ENCODE measurements at regions of chr3 and their contacts with region 1.

Region 1: GRCh38 chr3:193831495-193832455 is 238.8 kb downstream of the OPA1 start:
- DNase-seq: no peak
- ATAC-seq: peak; percentile 85
- H3K4me3 Mint-ChIP-seq: peak overlapping the region; percentile 48
- H3K27ac Mint-ChIP-seq: peak overlapping the region; percentile 87
- H3K4me1 Mint-ChIP-seq: peaks cover 40% of the 10 kb centered on the region
- H3K27me3 Mint-ChIP-seq: peaks cover 4% of the 10 kb centered on the region
- CTCF ChIP-seq: no peak

Region 2: GRCh38 chr3:193620650-193621049 is 211.1 kb before region 1 on chr3:
- CTCF ChIA-PET with region 1: no interaction called
- POLR2A ChIA-PET with region 1: no interaction called
- intact Hi-C with region 1: no loop called
- DNase-seq: no peak
- ATAC-seq: no peak
- H3K4me3 Mint-ChIP-seq: no peak overlapping the region
- H3K27ac Mint-ChIP-seq: no peak overlapping the region
- H3K4me1 Mint-ChIP-seq: no peaks in the 10 kb centered on the region
- H3K27me3 Mint-ChIP-seq: no peaks in the 10 kb centered on the region
- CTCF ChIP-seq: no peak

Region 3: DNA sequence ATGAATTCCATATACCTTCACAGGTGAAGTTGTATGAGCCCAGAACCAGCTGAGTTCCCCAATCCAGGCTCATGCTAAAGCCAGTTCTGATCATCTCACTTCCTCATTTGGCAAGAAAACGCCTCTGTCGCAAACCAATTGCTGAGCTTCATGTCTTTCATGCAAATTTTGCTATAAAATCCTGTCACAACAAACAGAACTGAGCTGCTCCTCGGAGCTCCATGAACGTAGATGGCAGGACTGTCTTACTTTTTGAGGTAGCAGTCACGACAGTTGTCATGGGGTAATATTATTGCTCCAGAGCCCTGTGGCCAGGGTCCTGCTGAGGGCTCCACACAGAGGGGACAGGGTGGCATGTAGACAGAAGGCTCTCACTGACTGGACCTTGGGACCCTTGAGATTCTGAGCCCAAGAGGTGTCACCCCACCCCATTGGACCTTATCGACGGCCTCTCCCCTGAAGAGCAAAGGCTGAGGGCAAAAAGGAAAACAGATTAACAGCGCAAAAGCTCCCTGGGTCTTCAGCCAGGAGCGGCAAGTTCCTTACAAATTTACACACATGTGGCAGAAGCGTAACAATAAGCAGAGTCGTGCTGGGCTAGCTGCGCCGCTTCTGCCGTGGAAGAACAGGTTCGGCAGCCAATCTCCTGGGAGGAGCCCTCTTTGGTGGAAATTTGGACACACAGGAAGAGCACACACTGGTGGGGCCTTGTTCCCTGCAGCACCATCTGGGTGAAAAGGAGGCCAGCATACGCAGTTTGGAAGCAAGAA is 10.4 kb after region 1 on chr3:
- CTCF ChIA-PET with region 1: no interaction called
- POLR2A ChIA-PET with region 1: interaction called, 3 read pairs
- intact Hi-C with region 1: loop called (anchors 1 kb)
- DNase-seq: peak; percentile 24
- ATAC-seq: peak; percentile 91
- H3K4me3 Mint-ChIP-seq: peak overlapping the region; percentile 72
- H3K27ac Mint-ChIP-seq: peak overlapping the region; percentile 81
- H3K4me1 Mint-ChIP-seq: peaks cover 42% of the 10 kb centered on the region
- H3K27me3 Mint-ChIP-seq: peaks cover 2% of the 10 kb centered on the region
- CTCF ChIP-seq: no peak

Region 4: DNA sequence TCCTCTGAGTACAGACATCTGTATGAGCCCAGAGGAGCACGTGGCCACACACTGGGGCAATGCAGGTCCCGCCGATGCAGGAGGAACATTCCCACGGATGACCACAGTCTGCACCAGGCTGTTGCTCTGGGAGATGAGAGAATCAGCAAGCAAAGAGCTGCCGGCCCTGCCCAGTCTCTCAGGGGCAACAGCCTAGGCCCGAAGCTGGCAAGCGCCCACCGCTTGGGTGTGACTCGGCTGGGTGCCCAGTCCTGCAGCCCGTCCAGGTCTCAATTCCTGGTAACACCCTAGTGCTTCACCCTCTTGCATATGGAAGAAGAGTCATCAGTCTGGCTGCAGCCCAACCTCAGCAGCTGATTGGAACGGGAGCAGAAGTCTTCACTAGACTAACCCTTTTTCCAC is 150.5 kb after region 1 on chr3:
- CTCF ChIA-PET with region 1: no interaction called
- POLR2A ChIA-PET with region 1: no interaction called
- intact Hi-C with region 1: no loop called
- DNase-seq: no peak
- ATAC-seq: no peak
- H3K4me3 Mint-ChIP-seq: no peak overlapping the region
- H3K27ac Mint-ChIP-seq: no peak overlapping the region
- H3K4me1 Mint-ChIP-seq: no peaks in the 10 kb centered on the region
- H3K27me3 Mint-ChIP-seq: peaks cover 11% of the 10 kb centered on the region
- CTCF ChIP-seq: no peak

Region 5: GRCh38 chr3:194003125-194004057 is 171.6 kb after region 1 on chr3:
- CTCF ChIA-PET with region 1: no interaction called
- POLR2A ChIA-PET with region 1: no interaction called
- intact Hi-C with region 1: loop called (anchors 1 kb)
- DNase-seq: peak; percentile 70
- ATAC-seq: peak; percentile 94
- H3K4me3 Mint-ChIP-seq: peak overlapping the region; percentile 76
- H3K27ac Mint-ChIP-seq: peak overlapping the region; percentile 65
- H3K4me1 Mint-ChIP-seq: peaks cover 40% of the 10 kb centered on the region
- H3K27me3 Mint-ChIP-seq: peaks cover 6% of the 10 kb centered on the region
- CTCF ChIP-seq: no peak

Region 6: DNA sequence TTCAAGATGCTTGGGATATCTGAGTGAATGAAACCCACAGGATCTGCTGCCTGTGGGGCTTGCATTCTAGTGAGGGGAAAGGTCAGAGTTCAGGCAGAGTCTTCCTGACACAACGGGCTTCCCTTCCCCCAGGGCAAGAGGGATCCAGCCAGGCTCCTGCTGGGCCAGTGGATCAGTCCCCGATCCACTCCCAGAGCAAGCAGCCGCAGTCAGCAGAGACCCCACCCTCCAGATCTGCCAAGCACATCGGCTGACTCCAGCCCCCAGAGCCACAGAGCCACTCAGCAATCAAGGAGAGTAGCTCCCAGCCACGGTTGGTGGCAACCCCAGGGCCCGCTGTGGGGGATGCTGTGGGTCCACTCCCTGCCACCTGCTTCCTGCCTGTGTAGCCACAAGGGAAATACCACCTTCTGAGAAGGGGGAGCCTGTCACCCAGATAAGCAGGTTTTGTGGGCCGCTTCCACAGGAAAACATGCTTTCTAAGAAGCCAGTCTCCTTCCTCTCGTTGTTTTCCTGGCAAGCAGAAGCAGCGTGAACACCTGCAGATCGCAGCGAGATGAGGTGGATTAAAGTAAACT is 474.4 kb after region 1 on chr3:
- CTCF ChIA-PET with region 1: no interaction called
- POLR2A ChIA-PET with region 1: interaction called, 3 read pairs
- intact Hi-C with region 1: loop called (anchors 1 kb)
- DNase-seq: peak; percentile 51
- ATAC-seq: peak; percentile 61
- H3K4me3 Mint-ChIP-seq: peak overlapping the region; percentile 70
- H3K27ac Mint-ChIP-seq: peak overlapping the region; percentile 84
- H3K4me1 Mint-ChIP-seq: no peaks in the 10 kb centered on the region
- H3K27me3 Mint-ChIP-seq: no peaks in the 10 kb centered on the region
- CTCF ChIP-seq: no peak